ENCODE measurements at regions of chr3 and their contacts with region 1.

Region 1: DNA sequence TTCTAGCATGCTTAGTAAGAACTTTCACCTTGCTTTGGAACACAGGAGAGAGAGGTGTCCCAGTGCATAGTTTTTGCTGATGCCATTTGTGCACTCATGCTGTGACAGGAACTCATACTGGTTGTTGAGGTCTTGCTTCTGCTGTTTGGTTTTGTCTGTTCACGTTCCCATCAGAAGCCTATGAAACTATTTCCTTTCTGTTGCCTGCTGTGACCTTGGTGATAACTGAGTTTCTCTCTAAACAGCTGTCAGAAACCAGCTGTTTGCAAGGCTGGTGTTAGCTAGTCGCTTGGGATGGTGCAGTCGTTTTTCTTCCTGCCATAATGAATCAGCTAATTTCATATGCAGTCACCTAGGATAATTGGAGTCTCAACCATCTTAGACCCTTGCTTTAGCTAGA is 724.1 kb downstream of the GRM7 start:
- DNase-seq: no peak

Region 2: DNA sequence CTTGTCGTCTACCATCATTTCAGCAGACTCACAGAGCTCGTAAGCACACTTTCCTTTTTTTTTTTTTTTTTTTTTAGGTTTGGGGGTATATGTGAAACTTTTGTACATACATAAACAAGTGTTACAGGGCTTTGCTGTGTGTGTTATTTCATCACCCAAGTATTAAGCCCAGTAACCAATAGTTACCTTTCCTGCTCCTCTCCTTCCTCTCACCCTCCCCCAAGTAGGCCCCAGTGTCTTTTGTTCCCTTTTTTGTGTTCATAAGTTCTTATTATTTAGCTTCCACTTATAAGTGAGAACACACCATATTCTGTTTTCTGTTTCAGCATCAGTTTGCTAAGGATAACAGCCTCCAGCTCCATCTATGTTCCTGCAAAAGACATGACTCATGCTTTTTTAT is 22.6 kb after region 1 on chr3:
- intact Hi-C with region 1: no loop called
- DNase-seq: no peak

Region 3: GRCh38 chr3:8052659-8053058 is 467.6 kb after region 1 on chr3:
- intact Hi-C with region 1: loop called in 1 of 2 experiments (anchors 5 kb)
- DNase-seq: peak; percentile 25

Region 4: DNA sequence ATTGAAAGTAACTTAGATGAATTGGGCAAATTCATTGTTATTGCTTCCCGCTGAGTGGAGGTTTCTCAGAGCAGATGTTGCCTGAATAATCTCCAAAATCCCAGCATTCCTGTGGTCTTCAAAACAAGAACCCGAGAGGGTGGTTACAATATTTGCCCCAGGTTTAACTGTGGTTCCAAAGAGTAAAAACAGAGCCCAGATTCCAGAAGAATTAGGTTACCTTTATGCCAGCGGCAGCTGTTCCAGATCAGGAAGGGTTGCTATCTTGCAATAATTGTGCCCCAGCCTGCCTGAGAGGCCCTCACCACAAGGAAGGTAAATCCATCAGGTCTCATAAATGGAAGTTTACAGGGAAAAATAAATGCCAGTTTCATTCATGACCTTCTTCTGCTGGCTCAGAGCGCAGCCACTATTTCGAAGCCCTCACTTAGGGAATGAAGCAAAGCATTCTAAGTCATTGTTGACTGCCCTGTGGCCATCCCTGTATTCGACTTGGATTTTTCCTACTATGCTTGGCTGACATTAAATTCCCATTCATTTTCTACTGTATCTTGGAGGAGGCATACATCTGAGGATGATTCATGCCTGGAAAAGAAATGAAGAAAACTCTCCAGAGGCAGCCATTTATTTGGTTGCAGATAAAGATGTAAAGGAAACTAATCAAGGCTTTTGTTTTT is 1005.0 kb after region 1 on chr3:
- intact Hi-C with region 1: loop called in 1 of 2 experiments (anchors 10 kb)
- DNase-seq: no peak